ENCODE measurements at regions of chr14 and their contacts with region 1.

Region 1: DNA sequence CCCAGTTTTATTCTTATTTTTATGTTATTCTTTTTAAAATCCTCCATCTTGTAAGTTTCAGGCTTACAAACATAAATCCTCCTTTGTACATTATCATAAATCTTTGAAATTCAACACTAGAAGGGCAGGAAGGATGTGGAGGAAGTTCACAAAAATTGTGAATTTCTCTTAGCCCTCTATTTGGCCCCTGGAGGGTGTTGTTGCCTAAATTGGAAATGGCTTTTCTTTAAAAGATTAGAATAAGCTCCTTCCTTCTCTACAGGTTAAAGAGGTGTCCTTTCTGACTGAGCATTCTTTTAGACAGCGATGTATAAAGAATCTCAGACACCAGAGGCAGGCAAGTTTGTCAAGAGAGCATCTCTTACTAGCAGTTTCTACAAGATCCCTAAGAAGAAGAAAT is 391.7 kb upstream of the OR4E1 start:
- DNase-seq: no peak
- ATAC-seq: peak in 3 of 4 experiments; percentile 56 to 61 (median 58)
- H3K4me3 ChIP-seq: no peak overlapping the region
- H3K4me3 Mint-ChIP-seq: peak overlapping the region in 1 of 3 donors; percentile 49
- H3K27ac ChIP-seq: no peak overlapping the region
- H3K27ac Mint-ChIP-seq: peak overlapping the region; percentile 71 to 81
- H3K4me1 ChIP-seq: peaks cover 10 to 29% of the 10 kb centered on the region in 2 experiments
- H3K4me1 Mint-ChIP-seq: peaks cover 27 to 34% (median 28%) of the 10 kb centered on the region in 3 donors
- H3K27me3 ChIP-seq: no peaks in the 10 kb centered on the region
- H3K27me3 Mint-ChIP-seq: peaks cover 0 to 2% of the 10 kb centered on the region in 2 donors

Region 2: DNA sequence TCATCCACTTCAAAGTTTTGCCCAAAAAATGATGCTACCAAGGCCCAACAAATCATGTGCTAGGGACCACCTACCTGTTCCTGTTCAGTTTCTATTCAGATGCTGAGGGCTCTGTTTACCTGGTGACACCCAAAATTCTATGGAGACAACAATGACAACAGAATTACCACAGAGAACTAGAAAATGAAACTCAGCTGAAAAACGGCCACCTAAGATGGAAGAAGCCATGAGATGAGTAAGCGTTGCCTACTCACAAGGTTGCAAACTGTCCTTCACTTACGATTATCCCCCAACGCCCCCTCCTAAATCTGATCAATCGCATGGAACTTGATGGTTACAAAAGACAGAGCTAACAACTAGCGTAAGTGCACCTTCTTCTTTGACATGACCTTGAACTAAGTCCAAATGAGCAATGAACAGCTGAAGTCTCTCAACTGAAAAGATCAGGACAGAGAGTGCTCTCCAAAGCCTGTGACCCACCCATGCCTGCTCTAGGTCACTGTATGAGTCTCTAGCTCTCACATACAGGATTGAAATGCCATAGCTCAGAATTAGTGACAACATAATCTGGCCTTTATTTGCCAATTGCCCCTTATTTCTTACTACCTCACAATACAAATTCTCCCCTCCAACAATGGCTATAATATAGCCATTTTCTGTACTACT is 1477.7 kb before region 1 on chr14 and contains the start of gene RNASE11:
- CTCF ChIA-PET with region 1: no interaction called
- POLR2A ChIA-PET with region 1: no interaction called
- DNase-seq: no peak
- ATAC-seq: no peak
- H3K4me3 ChIP-seq: no peak within 1 kb of the TSS
- H3K4me3 Mint-ChIP-seq: no peak within 1 kb of the TSS
- H3K27ac ChIP-seq: no peak within 1 kb of the TSS
- H3K27ac Mint-ChIP-seq: no peak within 1 kb of the TSS
- H3K4me1 ChIP-seq: no peaks in the 10 kb centered on the region
- H3K4me1 Mint-ChIP-seq: peaks cover 2 to 7% (median 3%) of the 10 kb centered on the region in 3 donors
- H3K27me3 ChIP-seq: peaks cover 0 to 6% of the 10 kb centered on the region in 2 experiments
- H3K27me3 Mint-ChIP-seq: peaks cover 11 to 24% of the 10 kb centered on the region in 2 donors
- total RNA-seq, gene RNASE11: not detected

Region 3: DNA sequence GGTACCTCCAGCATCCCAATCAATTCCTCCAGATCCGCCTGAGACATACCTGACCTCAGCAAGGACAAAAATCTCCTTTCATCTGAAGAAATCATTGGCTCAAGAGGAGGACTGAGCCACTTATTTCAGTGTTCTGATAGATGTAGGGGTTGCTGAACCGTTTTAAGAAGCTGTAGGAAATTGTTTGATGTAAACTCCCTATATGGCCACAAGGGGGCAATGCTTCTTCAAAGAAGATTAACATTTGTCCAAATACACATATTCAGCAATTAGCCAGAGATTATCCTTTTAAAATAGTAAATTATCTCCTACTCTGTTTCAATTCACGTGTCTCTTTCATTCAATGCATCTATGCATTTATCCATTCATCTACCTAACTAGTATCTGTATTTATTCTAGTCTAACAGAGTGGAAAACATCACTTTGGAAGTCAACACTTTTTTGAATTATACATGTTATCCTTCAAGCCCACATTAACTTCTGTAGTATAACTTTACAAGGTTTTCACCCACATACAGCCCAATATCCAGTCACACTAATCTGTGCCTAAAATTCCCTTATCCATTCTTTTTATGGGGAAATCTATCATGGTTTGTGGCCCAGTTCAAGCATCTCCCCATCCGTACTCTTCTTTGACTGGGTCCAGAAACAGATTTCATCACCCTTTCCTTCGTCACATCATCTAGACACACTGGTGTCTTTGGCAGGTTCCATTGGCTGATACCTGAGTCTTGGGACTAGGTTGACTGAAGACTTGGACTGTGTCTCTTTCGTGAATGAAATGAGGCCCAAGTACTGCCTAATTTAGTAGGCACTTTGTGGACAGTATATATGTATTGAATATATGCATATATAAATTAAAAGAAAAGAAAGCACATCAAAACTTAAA is 19.3 kb after region 1 on chr14:
- CTCF ChIA-PET with region 1: interaction called in 1 of 2 experiments, 13 read pairs
- POLR2A ChIA-PET with region 1: interaction called in 1 of 2 experiments, 3 read pairs
- DNase-seq: peak in 7 of 35 experiments; percentile 5 to 71 (median 26)
- ATAC-seq: peak; percentile 32 to 40 (median 34)
- H3K4me3 ChIP-seq: no peak overlapping the region
- H3K4me3 Mint-ChIP-seq: peak overlapping the region in 2 of 3 donors; percentile 32 to 62
- H3K27ac ChIP-seq: no peak overlapping the region
- H3K27ac Mint-ChIP-seq: peak overlapping the region; percentile 74 to 79
- H3K4me1 ChIP-seq: peaks cover 6 to 20% of the 10 kb centered on the region in 2 experiments
- H3K4me1 Mint-ChIP-seq: peaks cover 26 to 30% (median 28%) of the 10 kb centered on the region in 3 donors
- H3K27me3 ChIP-seq: no peaks in the 10 kb centered on the region
- H3K27me3 Mint-ChIP-seq: no peaks in the 10 kb centered on the region

Measured in T-cell (primary cell).